Activated CD4-positive, alpha-beta T cell treated with anti-CD3 and anti-CD28 coated beads for 36 hours (primary cell): ENCODE measurements at regions of chr2 and their contacts with region 1.

Region 1: DNA sequence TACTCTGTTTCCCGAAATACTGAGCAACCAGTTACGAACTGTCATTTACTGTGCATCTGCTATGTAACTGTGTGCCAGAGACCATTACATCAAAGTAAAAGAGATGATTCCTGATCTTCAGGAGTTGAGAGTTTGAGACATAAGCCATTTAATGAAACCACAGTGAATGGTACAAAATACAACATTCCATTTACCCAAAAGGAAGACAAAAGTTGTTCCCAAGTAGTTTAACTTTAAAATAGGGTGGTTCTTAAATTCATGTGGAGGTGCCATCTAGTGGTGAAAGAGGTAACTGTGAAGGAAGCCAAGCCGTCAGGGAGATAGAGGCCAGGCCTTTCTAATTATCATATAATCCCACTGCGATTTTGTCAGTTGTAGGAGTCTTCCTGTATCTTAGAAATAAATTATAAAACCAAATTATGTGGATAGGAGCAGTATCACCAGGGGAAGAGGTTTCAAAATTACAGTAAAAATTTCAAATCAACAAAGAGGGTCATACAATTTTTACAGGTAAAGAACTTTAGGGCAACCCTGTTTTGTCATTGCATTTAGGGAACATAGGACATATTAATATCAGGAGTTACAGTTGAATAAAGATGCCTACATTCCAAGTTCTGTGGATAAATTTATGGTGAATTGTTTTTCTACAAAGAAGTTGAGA is 67.7 kb downstream of the EPAS1 start:
- DNase-seq: peak; percentile 49
- ATAC-seq: no peak
- H3K4me3 Mint-ChIP-seq: no peak overlapping the region
- H3K27ac Mint-ChIP-seq: no peak overlapping the region
- H3K4me1 Mint-ChIP-seq: peaks cover 31% of the 10 kb centered on the region
- H3K27me3 Mint-ChIP-seq: no peaks in the 10 kb centered on the region

Region 2: DNA sequence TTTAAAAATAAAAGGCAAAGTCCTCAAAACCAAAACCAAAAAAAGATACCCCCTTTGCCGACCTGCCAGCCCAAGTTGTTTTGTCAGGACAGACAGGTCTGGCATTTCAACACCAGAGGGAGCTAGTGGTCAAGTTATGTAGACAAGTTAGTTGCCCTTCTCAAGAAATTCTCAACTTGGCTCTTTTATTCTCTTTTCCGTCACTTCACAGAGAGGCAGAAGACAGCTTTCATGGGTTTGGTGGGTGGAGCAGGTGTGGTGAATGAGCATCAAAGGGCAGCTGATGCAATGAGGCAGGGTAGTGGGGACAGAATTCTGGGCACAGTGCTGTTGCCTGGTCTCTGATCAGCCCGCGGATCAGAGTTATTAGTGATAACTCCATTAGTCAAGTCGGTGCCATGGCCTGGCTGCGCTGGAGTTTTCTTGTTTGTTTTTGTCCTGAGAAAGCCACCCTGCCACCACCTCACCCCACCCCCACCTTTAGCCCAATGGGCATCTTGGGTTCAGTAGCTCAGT is 371.4 kb before region 1 on chr2:
- CTCF ChIA-PET with region 1: interaction called, 6 read pairs
- POLR2A ChIA-PET with region 1: no interaction called
- intact Hi-C with region 1: loop called (anchors 1 kb)
- DNase-seq: peak; percentile 76
- ATAC-seq: peak; percentile 85
- H3K4me3 Mint-ChIP-seq: no peak overlapping the region
- H3K27ac Mint-ChIP-seq: no peak overlapping the region
- H3K4me1 Mint-ChIP-seq: peaks cover 8% of the 10 kb centered on the region
- H3K27me3 Mint-ChIP-seq: no peaks in the 10 kb centered on the region

Region 3: GRCh38 chr2:46062637-46063412 is 302.1 kb before region 1 on chr2:
- CTCF ChIA-PET with region 1: interaction called, 17 read pairs
- POLR2A ChIA-PET with region 1: no interaction called
- intact Hi-C with region 1: loop called (anchors 1 kb)
- DNase-seq: peak; percentile 85
- ATAC-seq: peak; percentile 52
- H3K4me3 Mint-ChIP-seq: no peak overlapping the region
- H3K27ac Mint-ChIP-seq: no peak overlapping the region
- H3K4me1 Mint-ChIP-seq: peaks cover 17% of the 10 kb centered on the region
- H3K27me3 Mint-ChIP-seq: no peaks in the 10 kb centered on the region

Region 4: DNA sequence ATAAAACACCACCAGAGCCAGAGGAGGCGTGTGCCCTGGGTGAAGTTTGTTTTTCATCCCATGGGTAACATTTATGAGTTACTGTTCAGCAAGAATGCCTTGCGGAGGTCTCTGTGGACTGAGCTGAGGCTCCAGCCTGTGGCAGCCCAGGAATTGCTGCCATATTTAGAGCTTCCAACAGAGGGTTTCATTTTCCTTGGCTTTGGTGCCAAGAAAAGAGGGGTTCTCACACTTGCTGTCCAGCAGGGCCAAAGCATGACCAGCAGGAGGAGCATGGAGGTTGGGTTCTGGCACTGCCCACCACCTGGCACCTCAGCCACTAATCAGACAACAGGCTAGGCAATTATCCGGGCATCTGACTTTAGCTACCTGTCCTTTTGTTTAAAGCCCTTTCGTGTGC is 31.0 kb before region 1 on chr2:
- CTCF ChIA-PET with region 1: interaction called, 3 read pairs
- POLR2A ChIA-PET with region 1: no interaction called
- intact Hi-C with region 1: loop called in 1 of 2 experiments (anchors 1 kb)
- DNase-seq: no peak
- ATAC-seq: no peak
- H3K4me3 Mint-ChIP-seq: no peak overlapping the region
- H3K27ac Mint-ChIP-seq: no peak overlapping the region
- H3K4me1 Mint-ChIP-seq: peaks cover 25% of the 10 kb centered on the region
- H3K27me3 Mint-ChIP-seq: peaks cover 4% of the 10 kb centered on the region

Region 5: DNA sequence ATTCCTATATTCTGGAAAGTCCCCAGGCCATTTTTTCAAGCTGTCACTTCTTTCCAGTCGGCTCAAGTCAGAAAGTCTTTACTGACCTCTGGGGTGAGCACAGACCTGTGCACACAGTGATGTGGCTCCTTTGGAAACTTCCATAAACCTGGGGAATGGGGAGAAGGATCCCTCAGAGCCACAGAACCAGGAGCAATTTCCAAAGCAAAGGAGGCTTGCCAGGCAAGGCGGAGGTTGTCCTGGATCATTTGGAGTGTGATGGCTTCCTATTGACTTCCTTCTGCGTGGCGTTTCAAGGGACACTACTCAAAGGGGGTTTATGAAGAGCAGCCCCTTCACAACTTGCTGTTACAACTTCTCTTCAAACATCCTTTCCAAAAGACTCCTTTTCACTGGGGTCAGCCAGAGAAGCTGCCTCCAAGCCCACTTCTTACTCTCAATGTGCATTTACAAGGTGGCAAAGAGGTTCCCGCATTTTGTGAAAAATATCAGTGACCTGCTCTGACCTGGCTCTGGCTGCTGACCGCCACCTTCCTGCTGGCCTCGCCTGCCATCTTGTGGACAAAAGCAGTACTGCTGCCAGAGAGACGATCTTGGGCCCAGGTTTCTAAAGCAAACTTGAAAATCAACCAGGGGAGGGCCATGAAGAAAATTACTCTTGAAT is 96.2 kb after region 1 on chr2:
- CTCF ChIA-PET with region 1: interaction called, 5 read pairs
- POLR2A ChIA-PET with region 1: no interaction called
- intact Hi-C with region 1: loop called in 1 of 2 experiments (anchors 2 kb)
- DNase-seq: peak; percentile 83
- ATAC-seq: peak; percentile 58
- H3K4me3 Mint-ChIP-seq: no peak overlapping the region
- H3K27ac Mint-ChIP-seq: peak overlapping the region; percentile 0
- H3K4me1 Mint-ChIP-seq: peaks cover 2% of the 10 kb centered on the region
- H3K27me3 Mint-ChIP-seq: peaks cover 2% of the 10 kb centered on the region